Ovary (tissue), 10 donors: ENCODE measurements at regions of chr5 and their contacts with region 1.

Region 1: GRCh38 chr5:135834639-135835529 is at the start of gene SLC25A48:
- DNase-seq: peak in 2 of 5 donors; percentile 36 to 47
- H3K4me3 ChIP-seq: no peak within 1 kb of the TSS
- H3K27ac ChIP-seq: no peak within 1 kb of the TSS
- H3K4me1 ChIP-seq: no peaks in the 10 kb centered on the region
- H3K27me3 ChIP-seq: no peaks in the 10 kb centered on the region
- CTCF ChIP-seq: no peak
- EP300 ChIP-seq: no peak
- POLR2A ChIP-seq: no peak
- total RNA-seq, gene SLC25A48: 1.4 TPM in 1 of 7 donors, not detected in the others

Region 2: DNA sequence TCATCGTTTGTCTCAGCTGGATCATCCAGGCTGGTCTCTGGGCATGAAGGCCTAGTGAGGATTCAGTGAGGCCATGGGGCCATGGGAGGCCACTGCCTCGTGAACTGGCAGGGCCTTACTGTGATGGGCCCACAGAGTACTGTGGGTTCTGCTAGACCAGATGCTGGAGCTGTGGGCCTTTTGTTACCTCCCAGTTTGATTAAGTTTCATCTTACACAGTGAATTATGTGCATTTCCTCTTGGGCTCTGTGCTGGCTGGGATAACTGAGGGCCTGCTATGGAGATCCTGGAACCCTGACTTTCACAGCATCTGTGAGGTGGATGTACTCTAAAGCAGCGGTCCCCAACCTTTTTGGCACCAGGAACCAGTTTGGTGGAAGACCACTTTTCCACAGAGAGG is 20.1 kb before region 1 on chr5:
- intact Hi-C with region 1: loop called in 1 of 4 experiments (anchors 1 kb)
- DNase-seq: no peak
- H3K4me3 ChIP-seq: no peak overlapping the region
- H3K27ac ChIP-seq: no peak overlapping the region
- H3K4me1 ChIP-seq: no peaks in the 10 kb centered on the region
- H3K27me3 ChIP-seq: no peaks in the 10 kb centered on the region
- CTCF ChIP-seq: no peak
- EP300 ChIP-seq: no peak
- POLR2A ChIP-seq: no peak